Psoas muscle (tissue), 8 donors: ENCODE measurements at regions of chr9 and their contacts with region 1.

Region 1: GRCh38 chr9:33816327-33817252 is at the start of gene UBE2R2:
- DNase-seq: peak; percentile 91 to 95
- ATAC-seq: peak; percentile 79 to 88 (median 86)
- H3K4me3 ChIP-seq: peak within 1 kb of the TSS; percentile 93
- H3K27ac ChIP-seq: peak within 1 kb of the TSS; percentile 98
- H3K4me1 ChIP-seq: peaks cover 48% of the 10 kb centered on the region
- H3K27me3 ChIP-seq: no peaks in the 10 kb centered on the region
- CTCF ChIP-seq: no peak
- total RNA-seq, gene UBE2R2: 48.0 to 62.9 (median 52.2) TPM

Region 2: DNA sequence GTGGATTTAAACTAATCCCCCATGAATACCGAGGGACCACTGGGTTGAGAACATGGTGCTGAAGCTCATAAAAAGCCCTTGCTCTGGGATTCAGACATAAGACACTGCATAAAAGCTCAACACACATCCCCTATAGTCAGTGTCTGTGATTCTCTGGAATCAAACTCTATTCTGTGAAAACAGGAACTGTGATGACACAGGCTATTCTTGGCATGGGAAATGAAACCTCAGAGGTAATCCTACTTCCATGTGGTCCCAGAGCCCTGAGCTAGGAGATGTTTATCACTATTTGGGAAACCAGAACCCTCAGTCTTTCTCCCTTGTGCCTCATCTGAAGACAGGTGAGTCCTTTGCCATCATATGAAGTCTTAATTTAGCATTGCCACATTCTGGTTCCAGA is 156.7 kb before region 1 on chr9:
- intact Hi-C with region 1: no loop called
- DNase-seq: no peak
- ATAC-seq: no peak
- H3K4me3 ChIP-seq: no peak overlapping the region
- H3K27ac ChIP-seq: no peak overlapping the region
- H3K4me1 ChIP-seq: no peaks in the 10 kb centered on the region
- H3K27me3 ChIP-seq: peaks cover 0 to 3% (median 0%) of the 10 kb centered on the region in 3 donors
- CTCF ChIP-seq: no peak

Region 3: GRCh38 chr9:33852216-33852826 is 35.7 kb after region 1 on chr9:
- intact Hi-C with region 1: loop called (anchors 1 to 2 kb)
- DNase-seq: peak; percentile 56 to 79
- ATAC-seq: peak; percentile 79 to 86 (median 84)
- H3K4me3 ChIP-seq: no peak overlapping the region
- H3K27ac ChIP-seq: peak overlapping the region; percentile 61
- H3K4me1 ChIP-seq: peaks cover 39% of the 10 kb centered on the region
- H3K27me3 ChIP-seq: no peaks in the 10 kb centered on the region
- CTCF ChIP-seq: peak; percentile 67